Right ventricle myocardium superior (tissue), 1 donor: ENCODE measurements at regions of chr2 and their contacts with region 1.

Region 1: GRCh38 chr2:27095745-27096651 is 9.4 kb downstream of the KHK start:
- DNase-seq: peak; percentile 73
- ATAC-seq: peak; percentile 90

Region 2: DNA sequence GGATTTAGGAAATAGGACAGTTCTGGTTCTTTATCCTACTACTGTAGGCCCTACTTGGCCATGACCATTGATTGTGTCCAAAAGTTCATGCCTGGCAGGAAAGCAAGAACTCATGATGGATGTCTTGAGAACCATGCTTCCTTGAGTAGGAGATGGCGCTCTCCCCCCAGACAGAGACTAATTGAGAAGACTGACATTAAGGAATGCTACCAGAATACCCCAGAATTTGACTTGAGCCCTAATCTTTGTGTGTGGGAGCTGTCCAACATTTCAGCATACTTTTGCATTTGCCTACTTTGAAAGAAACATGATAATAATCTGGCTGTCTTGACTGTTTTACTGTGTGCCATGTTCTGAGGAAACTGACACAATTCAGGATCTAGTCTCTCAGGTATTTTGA is 102.2 kb before region 1 on chr2:
- intact Hi-C with region 1: no loop called
- DNase-seq: no peak
- ATAC-seq: no peak

Region 3: GRCh38 chr2:27191053-27191829 is 95.2 kb after region 1 on chr2:
- intact Hi-C with region 1: loop called (anchors 5 kb)
- DNase-seq: no peak
- ATAC-seq: peak; percentile 85